Colonic mucosa (tissue), 4 donors: ENCODE measurements at regions of chr14 and their contacts with region 1.

Region 1: GRCh38 chr14:74860906-74861733 is 14.8 kb downstream of the PROX2 start:
- DNase-seq: peak; percentile 95
- H3K4me3 ChIP-seq: no peak overlapping the region
- H3K27ac ChIP-seq: no peak overlapping the region
- H3K4me1 ChIP-seq: no peaks in the 10 kb centered on the region
- H3K27me3 ChIP-seq: no peaks in the 10 kb centered on the region
- CTCF ChIP-seq: peak; percentile 93

Region 2: GRCh38 chr14:74905375-74906142 is 44.4 kb after region 1 on chr14:
- intact Hi-C with region 1: loop called (anchors 2 kb)
- DNase-seq: peak; percentile 78
- H3K4me3 ChIP-seq: no peak overlapping the region
- H3K27ac ChIP-seq: no peak overlapping the region
- H3K4me1 ChIP-seq: peaks cover 3% of the 10 kb centered on the region
- H3K27me3 ChIP-seq: no peaks in the 10 kb centered on the region
- CTCF ChIP-seq: peak; percentile 93

Region 3: GRCh38 chr14:75088574-75089373 is 227.7 kb after region 1 on chr14:
- intact Hi-C with region 1: loop called (anchors 5 kb)
- DNase-seq: peak; percentile 72
- H3K4me3 ChIP-seq: no peak overlapping the region
- H3K27ac ChIP-seq: no peak overlapping the region
- H3K4me1 ChIP-seq: no peaks in the 10 kb centered on the region
- H3K27me3 ChIP-seq: no peaks in the 10 kb centered on the region
- CTCF ChIP-seq: peak; percentile 61